ENCODE measurements at regions of chr15 and their contacts with region 1.

Region 1: GRCh38 chr15:25850154-25851111 is 12.7 kb downstream of the ATP10A start:
- DNase-seq: peak; percentile 58
- H3K4me3 Mint-ChIP-seq: peak overlapping the region; percentile 93
- H3K27ac Mint-ChIP-seq: peak overlapping the region; percentile 100
- H3K4me1 Mint-ChIP-seq: peaks cover 89% of the 10 kb centered on the region
- H3K27me3 Mint-ChIP-seq: no peaks in the 10 kb centered on the region

Region 2: GRCh38 chr15:24956111-24956838 is 894.2 kb before region 1 on chr15:
- intact Hi-C with region 1: loop called (anchors 5 kb)
- DNase-seq: peak; percentile 65
- H3K4me3 Mint-ChIP-seq: peak overlapping the region; percentile 95
- H3K27ac Mint-ChIP-seq: peak overlapping the region; percentile 92
- H3K4me1 Mint-ChIP-seq: peaks cover 10% of the 10 kb centered on the region
- H3K27me3 Mint-ChIP-seq: no peaks in the 10 kb centered on the region

Region 3: GRCh38 chr15:25790000-25790660 is 60.3 kb before region 1 on chr15:
- intact Hi-C with region 1: loop called (anchors 1 kb)
- DNase-seq: peak; percentile 33
- H3K4me3 Mint-ChIP-seq: no peak overlapping the region
- H3K27ac Mint-ChIP-seq: peak overlapping the region; percentile 87
- H3K4me1 Mint-ChIP-seq: peaks cover 56% of the 10 kb centered on the region
- H3K27me3 Mint-ChIP-seq: no peaks in the 10 kb centered on the region

Region 4: GRCh38 chr15:25832158-25832557 is 18.3 kb before region 1 on chr15:
- intact Hi-C with region 1: loop called (anchors 1 kb)
- DNase-seq: no peak
- H3K4me3 Mint-ChIP-seq: no peak overlapping the region
- H3K27ac Mint-ChIP-seq: peak overlapping the region; percentile 87
- H3K4me1 Mint-ChIP-seq: peaks cover 28% of the 10 kb centered on the region
- H3K27me3 Mint-ChIP-seq: no peaks in the 10 kb centered on the region

Region 5: GRCh38 chr15:25989327-25989726 is 138.9 kb after region 1 on chr15:
- intact Hi-C with region 1: no loop called
- DNase-seq: no peak
- H3K4me3 Mint-ChIP-seq: no peak overlapping the region
- H3K27ac Mint-ChIP-seq: no peak overlapping the region
- H3K4me1 Mint-ChIP-seq: no peaks in the 10 kb centered on the region
- H3K27me3 Mint-ChIP-seq: no peaks in the 10 kb centered on the region

Region 6: GRCh38 chr15:26082221-26083109 is 232.0 kb after region 1 on chr15:
- intact Hi-C with region 1: loop called (anchors 10 kb)
- DNase-seq: peak; percentile 90
- H3K4me3 Mint-ChIP-seq: peak overlapping the region; percentile 92
- H3K27ac Mint-ChIP-seq: peak overlapping the region; percentile 96
- H3K4me1 Mint-ChIP-seq: peaks cover 21% of the 10 kb centered on the region
- H3K27me3 Mint-ChIP-seq: peaks cover 5% of the 10 kb centered on the region